Right cardiac atrium (tissue), 5 donors: ENCODE measurements at regions of chr9 and their contacts with region 1.

Region 1: DNA sequence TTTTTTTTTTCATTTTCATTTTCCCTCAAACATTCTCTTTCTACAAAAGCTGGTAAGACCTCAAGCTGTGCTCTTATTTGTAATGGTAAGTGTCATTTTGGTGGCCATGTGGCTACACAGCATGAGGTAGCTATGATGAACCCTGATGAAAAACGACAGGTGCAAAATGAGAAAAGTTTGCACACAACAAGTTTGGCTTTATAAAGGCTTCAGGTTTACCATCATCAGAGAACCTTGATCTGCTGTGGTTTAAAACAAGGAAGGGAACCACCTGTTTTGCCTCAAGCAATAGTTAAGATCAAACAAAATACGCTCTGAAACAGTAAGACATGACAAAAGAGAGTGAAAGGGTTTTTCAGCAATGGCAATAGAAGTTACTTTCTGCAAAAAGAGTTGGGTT is 1124.6 kb upstream of the ACO1 start:
- DNase-seq: no peak
- ATAC-seq: no peak
- H3K4me3 ChIP-seq: no peak overlapping the region
- H3K27ac ChIP-seq: no peak overlapping the region
- H3K4me1 ChIP-seq: no peaks in the 10 kb centered on the region
- H3K27me3 ChIP-seq: no peaks in the 10 kb centered on the region

Region 2: GRCh38 chr9:30943446-30944155 is 316.2 kb before region 1 on chr9:
- intact Hi-C with region 1: no loop called
- DNase-seq: peak in 2 of 3 donors; percentile 19 to 29
- ATAC-seq: no peak
- H3K4me3 ChIP-seq: no peak overlapping the region
- H3K27ac ChIP-seq: no peak overlapping the region
- H3K4me1 ChIP-seq: no peaks in the 10 kb centered on the region
- H3K27me3 ChIP-seq: no peaks in the 10 kb centered on the region

Region 3: DNA sequence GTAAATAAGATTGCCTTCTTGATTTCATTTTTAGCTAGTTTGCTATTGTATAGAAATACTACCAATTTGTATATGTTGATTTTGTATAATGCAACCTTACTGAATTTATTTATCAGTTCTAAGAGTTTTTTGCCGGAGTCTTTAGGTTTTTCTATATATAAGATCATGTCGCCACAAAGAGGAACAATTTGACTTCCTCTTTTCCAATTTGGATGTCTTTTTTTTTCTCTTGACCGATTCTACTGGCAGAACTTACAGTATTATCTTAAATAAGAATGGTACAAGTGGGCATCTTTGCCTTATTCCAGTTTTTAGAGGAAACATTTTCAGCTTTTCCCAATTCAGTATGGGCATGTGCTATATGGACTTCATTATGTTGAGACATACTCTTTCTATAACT is 499.9 kb after region 1 on chr9:
- intact Hi-C with region 1: loop called in 1 of 4 experiments (anchors 10 kb)
- DNase-seq: no peak
- ATAC-seq: no peak
- H3K4me3 ChIP-seq: no peak overlapping the region
- H3K27ac ChIP-seq: no peak overlapping the region
- H3K4me1 ChIP-seq: no peaks in the 10 kb centered on the region
- H3K27me3 ChIP-seq: no peaks in the 10 kb centered on the region